PC-9 (cell line): ENCODE measurements at regions of chr6 and their contacts with region 1.

Region 1: GRCh38 chr6:7725849-7726415 is at the start of gene BMP6:
- DNase-seq: peak; percentile 78 to 90
- H3K4me3 ChIP-seq: peak within 1 kb of the TSS; percentile 71
- H3K27ac ChIP-seq: no peak within 1 kb of the TSS
- H3K4me1 ChIP-seq: peaks cover 27% of the 10 kb centered on the region
- H3K27me3 ChIP-seq: 0 out of 2 replicates have a peak, but pooled peaks cover 4% of the 10 kb centered on the region
- CTCF ChIP-seq: no peak
- total RNA-seq, gene BMP6: not detected in 2 replicates

Region 2: GRCh38 chr6:7673063-7673536 is 52.8 kb before region 1 on chr6:
- CTCF ChIA-PET with region 1: interaction called, 3 read pairs
- POLR2A ChIA-PET with region 1: no interaction called
- intact Hi-C with region 1: loop called (anchors 1 kb)
- DNase-seq: peak in 1 of 2 experiments; percentile 83
- H3K4me3 ChIP-seq: no peak overlapping the region
- H3K27ac ChIP-seq: no peak overlapping the region
- H3K4me1 ChIP-seq: peaks cover 11% of the 10 kb centered on the region
- H3K27me3 ChIP-seq: no peaks in the 10 kb centered on the region
- CTCF ChIP-seq: no peak

Region 3: DNA sequence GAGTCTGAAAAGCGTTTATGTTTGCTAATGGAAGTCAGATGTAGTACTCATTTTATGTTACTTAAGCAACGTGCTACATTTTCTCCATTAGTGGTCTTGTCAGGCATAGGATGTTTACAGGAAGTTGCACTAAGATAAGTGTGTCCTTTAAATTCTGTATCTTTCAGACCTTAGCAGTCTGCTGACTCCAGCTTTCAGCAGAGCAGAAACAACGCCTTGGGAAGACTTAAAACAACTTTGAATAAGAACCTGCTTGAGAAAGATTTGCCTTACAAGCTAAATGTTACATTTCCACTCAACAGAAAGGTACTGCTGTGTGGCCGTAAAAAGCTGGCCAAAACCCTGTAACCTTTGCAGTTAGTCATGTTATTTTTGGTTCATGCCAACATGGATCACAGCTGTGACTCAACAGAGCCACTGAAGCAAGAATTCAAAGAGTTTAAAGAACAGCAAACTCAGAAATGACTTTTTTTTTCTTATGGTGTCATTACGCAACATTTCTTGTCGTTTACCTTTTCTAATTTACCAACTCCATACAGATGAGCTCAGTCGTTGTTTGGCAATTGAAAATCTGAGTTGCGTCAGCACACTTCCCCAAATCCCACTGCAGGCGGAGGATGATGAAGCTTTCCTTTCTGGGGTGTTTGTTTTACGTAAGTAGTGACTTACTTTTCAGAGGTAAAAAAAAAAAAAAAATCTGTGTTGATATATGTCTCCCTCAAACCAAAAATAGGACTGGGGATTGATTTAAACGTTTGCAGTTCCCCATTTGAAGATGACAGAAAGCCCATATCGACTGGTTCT is 27.9 kb before region 1 on chr6:
- CTCF ChIA-PET with region 1: no interaction called
- POLR2A ChIA-PET with region 1: no interaction called
- intact Hi-C with region 1: no loop called
- DNase-seq: peak; percentile 20 to 89
- H3K4me3 ChIP-seq: peak overlapping the region; percentile 41; the same call in 1 of the 2 replicates
- H3K27ac ChIP-seq: peak overlapping the region; percentile 98
- H3K4me1 ChIP-seq: peaks cover 30% of the 10 kb centered on the region
- H3K27me3 ChIP-seq: no peaks in the 10 kb centered on the region
- CTCF ChIP-seq: no peak

Region 4: GRCh38 chr6:7992002-7992815 is 266.3 kb after region 1 on chr6:
- CTCF ChIA-PET with region 1: no interaction called
- POLR2A ChIA-PET with region 1: no interaction called
- intact Hi-C with region 1: loop called (anchors 1 kb)
- DNase-seq: peak in 1 of 2 experiments; percentile 51
- H3K4me3 ChIP-seq: no peak overlapping the region
- H3K27ac ChIP-seq: no peak overlapping the region
- H3K4me1 ChIP-seq: no peaks in the 10 kb centered on the region
- H3K27me3 ChIP-seq: no peaks in the 10 kb centered on the region
- CTCF ChIP-seq: peak; percentile 63

Region 5: DNA sequence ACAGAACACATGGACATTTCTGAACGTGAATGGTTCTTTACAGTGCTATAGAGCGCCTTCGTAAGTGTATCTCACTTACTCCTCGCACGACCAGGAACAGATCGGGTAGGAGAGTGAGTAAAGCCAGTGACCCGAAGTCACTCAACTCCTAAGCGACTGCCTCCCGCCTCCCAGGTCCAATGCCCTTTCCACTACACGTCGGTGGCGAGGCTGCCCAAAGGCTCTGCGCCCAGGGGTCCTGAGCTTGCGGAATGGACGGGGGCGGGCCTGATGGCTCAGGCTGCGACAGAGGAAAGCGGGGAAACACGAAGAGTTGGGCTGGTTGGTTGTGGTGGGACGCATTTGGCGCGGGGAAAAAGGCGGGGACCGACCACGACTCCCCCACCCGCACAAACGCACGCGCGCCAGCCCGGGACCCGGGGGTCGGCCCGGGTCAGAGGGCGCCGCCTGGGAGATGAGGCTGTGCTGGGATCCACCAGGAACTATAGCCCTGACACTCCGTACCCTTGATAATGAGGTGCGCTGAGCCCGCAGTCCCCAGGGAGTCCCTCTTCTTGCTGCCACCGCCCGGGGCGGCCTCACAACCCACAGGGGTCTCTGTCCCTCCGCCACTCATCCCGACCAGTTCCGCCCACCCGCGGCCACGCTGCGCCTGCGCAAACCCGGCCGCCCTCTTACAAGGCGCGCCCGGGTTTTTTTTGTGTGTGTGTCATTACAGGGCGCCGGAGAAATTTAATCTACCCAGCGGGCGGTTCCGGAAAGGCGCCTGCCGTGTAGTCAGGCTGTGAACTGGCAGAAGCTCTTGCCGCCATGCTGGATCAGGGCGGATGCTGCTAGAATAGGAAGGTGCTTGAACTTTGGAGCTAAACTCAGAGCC is 338.1 kb after region 1 on chr6 and contains the start of gene BLOC1S5:
- CTCF ChIA-PET with region 1: interaction called, 3 read pairs
- POLR2A ChIA-PET with region 1: no interaction called
- intact Hi-C with region 1: loop called (anchors 1 kb)
- DNase-seq: peak; percentile 84 to 95
- H3K4me3 ChIP-seq: peak within 1 kb of the TSS; percentile 83
- H3K27ac ChIP-seq: peak within 1 kb of the TSS; percentile 36
- H3K4me1 ChIP-seq: 0 out of 2 replicates have a peak, but pooled peaks cover 4% of the 10 kb centered on the region
- H3K27me3 ChIP-seq: no peaks in the 10 kb centered on the region
- CTCF ChIP-seq: no peak
- total RNA-seq, gene BLOC1S5: 12.5 and 16.1 TPM in 2 replicates